Activated T-helper 1 cell treated with anti-CD3 and anti-CD28 coated beads, Interleukin-12 subunit alpha, Interleukin-12 subunit beta, Interleukin-2, Interleukin-4 antibody, amounts not matched to agents 30 ng/mL and 10 ng/mL and 1 ng/mL, durations not matched to agents 14 hours and 24 hours and 36 hours (primary cell): ENCODE measurements at regions of chr20 and their contacts with region 1.

Region 1: DNA sequence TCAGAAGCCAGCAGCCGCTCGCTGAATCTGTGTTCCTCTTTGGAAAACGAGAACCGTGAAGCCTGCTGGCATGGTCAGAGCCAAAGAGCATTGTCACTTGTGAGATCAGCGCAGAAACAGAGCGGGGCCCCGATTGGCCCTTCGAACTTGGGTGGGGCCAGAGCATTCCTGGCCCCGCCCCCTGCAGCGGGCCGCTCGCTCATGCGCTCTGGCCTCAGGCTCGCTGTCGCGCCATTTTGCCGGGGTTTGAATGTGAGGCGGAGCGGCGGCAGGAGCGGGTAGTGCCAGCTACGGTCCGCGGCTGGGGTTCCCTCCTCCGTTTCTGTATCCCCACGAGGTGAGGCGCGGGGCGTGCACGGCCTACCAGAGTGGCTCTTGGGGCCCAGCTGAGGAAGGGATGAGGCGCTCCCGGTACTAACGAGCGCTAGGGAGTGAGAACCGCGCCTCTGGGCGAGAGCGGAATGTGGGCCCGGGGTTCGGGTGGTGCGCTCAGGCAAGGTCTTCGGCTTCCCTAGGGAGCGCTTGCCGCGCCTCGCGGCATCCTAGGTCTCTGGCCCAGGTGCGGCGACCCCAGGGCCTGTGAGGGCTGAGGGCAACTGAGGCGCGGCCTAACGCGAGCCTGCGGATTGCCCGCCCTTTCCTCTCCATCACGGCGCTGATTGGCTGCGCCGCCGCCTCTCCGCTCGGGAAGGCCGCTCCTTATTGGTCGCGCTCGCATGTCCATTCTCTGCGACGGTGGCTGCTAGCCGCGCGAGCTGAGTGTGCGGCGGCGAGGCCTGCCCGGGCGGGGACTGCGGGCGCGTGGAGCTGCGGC is at the start of gene CSE1L:
- DNase-seq: peak; percentile 94
- H3K4me3 Mint-ChIP-seq: peak within 1 kb of the TSS; percentile 88
- H3K27ac Mint-ChIP-seq: peak within 1 kb of the TSS; percentile 99
- H3K4me1 Mint-ChIP-seq: peaks cover 27% of the 10 kb centered on the region
- H3K27me3 Mint-ChIP-seq: peaks cover 2% of the 10 kb centered on the region
- total RNA-seq, gene CSE1L: 112 and 119 TPM in 2 replicates

Region 2: DNA sequence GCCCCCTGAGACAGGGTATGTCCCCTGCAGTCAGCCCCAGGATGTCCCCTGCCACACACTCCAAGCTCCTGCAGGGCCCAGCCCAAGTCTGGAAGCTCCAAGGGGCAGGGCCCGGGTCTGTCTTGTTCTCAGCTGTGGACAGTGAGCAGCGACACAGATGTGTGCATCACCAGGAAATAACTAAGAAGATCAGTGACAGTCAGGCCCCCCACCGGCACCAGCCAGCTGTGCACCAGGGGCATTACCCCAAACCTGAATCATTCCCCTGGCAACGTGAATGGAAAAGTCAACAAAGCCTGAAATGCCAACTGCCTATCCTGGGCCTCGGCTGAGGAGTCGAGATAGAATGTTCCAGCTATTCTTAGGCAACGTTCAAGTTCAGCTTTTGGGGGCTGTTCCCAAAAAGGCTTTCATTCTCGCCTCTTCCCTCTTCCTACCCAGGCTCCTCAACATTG is 323.5 kb before region 1 on chr20:
- intact Hi-C with region 1: no loop called
- DNase-seq: no peak
- H3K4me3 Mint-ChIP-seq: no peak overlapping the region
- H3K27ac Mint-ChIP-seq: peak overlapping the region; percentile 69
- H3K4me1 Mint-ChIP-seq: peaks cover 52% of the 10 kb centered on the region
- H3K27me3 Mint-ChIP-seq: no peaks in the 10 kb centered on the region

Region 3: GRCh38 chr20:48921151-48921898 is 125.0 kb before region 1 on chr20 and contains the start of gene ARFGEF2:
- intact Hi-C with region 1: loop called (anchors 1 kb)
- DNase-seq: peak; percentile 96
- H3K4me3 Mint-ChIP-seq: peak within 1 kb of the TSS; percentile 98
- H3K27ac Mint-ChIP-seq: peak within 1 kb of the TSS; percentile 99
- H3K4me1 Mint-ChIP-seq: peaks cover 50% of the 10 kb centered on the region
- H3K27me3 Mint-ChIP-seq: peaks cover 4% of the 10 kb centered on the region
- total RNA-seq, gene ARFGEF2: 28.3 and 30.1 TPM in 2 replicates

Region 4: DNA sequence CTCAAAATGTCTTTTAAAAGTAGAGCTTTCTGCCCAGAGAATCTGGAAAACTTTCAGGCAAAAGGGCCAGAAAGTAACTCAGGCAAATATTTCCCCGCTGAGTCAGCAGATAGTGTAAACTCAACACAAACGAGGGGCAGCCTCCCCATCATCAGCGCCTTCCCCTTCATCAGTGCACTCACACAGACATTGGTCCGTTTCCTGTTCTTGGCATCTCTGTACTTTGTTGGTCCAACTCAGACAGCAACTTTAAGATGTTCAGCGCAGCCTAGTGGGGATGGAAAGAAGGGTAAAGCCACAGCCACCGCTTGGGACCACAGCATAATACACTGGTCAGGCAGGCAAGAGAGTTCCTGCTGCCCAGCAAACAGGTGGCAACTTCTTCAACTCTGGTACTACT is 69.3 kb after region 1 on chr20:
- intact Hi-C with region 1: no loop called
- DNase-seq: no peak
- H3K4me3 Mint-ChIP-seq: no peak overlapping the region
- H3K27ac Mint-ChIP-seq: no peak overlapping the region
- H3K4me1 Mint-ChIP-seq: no peaks in the 10 kb centered on the region
- H3K27me3 Mint-ChIP-seq: no peaks in the 10 kb centered on the region

Region 5: GRCh38 chr20:49166534-49167449 is 120.5 kb after region 1 on chr20:
- intact Hi-C with region 1: loop called (anchors 5 kb)
- DNase-seq: no peak
- H3K4me3 Mint-ChIP-seq: peak overlapping the region; percentile 72
- H3K27ac Mint-ChIP-seq: peak overlapping the region; percentile 89
- H3K4me1 Mint-ChIP-seq: peaks cover 51% of the 10 kb centered on the region
- H3K27me3 Mint-ChIP-seq: no peaks in the 10 kb centered on the region

Region 6: DNA sequence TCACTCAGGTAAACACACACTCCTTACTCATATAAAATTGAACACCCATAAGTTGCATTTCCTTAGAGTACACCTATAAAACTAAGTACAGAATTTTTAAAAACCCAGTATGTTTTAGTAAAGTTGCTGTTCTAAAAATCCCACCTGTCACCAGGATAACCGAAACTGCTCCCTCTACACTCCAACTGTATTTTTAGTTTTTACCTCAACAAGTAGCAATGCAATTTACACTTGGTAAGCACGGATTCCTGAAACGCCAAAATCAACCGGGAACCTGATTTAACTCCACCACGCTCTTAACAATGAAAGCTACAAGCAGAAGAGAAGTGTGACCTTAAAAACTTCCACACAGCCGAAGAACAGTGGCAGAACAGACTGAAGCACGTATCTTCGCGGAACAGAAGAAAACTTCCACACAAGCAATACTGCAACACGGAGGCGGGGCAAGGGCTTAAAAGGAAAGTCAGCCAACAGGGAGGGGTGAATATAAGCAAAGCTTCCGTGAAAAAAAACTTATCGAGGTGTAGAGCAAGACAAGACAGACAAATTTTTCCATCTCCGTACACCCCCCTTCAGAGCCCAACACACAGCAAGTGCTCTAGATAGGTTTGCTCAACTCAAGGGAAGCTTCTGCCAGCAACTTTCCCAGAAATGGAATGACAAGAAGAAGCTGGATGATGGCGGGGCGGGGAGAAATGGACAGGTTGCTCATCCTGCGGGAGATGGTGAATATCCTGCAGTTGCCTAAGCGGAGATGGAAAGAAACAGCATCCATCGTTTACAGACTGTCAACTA is 140.4 kb after region 1 on chr20:
- intact Hi-C with region 1: loop called (anchors 1 kb)
- DNase-seq: peak; percentile 66
- H3K4me3 Mint-ChIP-seq: peak overlapping the region; percentile 89
- H3K27ac Mint-ChIP-seq: peak overlapping the region; percentile 81
- H3K4me1 Mint-ChIP-seq: peaks cover 50% of the 10 kb centered on the region
- H3K27me3 Mint-ChIP-seq: peaks cover 4% of the 10 kb centered on the region

Region 7: GRCh38 chr20:49256261-49256660 is 210.0 kb after region 1 on chr20:
- intact Hi-C with region 1: no loop called
- DNase-seq: no peak
- H3K4me3 Mint-ChIP-seq: no peak overlapping the region
- H3K27ac Mint-ChIP-seq: no peak overlapping the region
- H3K4me1 Mint-ChIP-seq: peaks cover 14% of the 10 kb centered on the region
- H3K27me3 Mint-ChIP-seq: no peaks in the 10 kb centered on the region

Region 8: DNA sequence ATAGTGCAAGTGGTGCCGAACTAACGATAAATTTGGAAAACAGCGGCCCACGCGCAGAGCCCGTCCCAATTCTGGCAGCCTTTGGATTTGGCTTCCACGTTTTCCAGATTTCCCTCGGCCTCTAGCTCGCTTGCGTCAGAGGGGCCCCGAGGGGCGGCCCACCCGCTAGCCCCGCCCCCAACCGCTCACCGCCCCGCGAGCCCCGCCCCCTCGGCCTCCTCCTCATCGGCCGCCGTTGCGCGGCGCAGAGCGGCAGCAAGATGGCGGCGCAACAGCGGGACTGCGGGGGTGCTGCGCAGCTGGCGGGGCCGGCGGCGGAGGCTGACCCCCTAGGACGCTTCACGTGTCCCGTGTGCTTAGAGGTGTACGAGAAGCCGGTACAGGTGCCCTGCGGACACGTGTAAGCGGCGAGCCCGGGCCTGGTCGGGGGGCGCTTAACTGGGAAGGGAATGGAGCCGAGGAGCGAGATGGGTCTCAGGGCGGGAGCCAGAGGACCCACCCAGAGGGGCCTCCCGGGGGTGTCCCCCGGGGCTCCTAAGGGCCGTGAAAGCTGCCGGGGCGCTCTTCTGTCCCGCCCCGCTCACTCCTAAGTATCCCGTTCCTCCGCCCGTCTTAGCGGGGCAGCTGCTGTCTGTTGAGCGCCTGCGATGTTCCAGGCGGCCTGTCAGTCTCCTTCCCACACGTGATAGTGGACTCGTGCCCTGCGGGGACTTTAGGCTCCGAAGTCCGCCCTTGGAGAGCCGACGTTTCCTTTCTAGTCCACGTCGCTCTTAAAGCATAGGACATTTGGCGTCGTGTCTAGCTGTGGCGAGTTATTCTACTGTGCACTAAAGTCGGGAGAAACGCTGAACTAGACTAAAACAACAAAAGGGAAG is 890.1 kb after region 1 on chr20 and contains the start of gene RNF114:
- intact Hi-C with region 1: loop called (anchors 2 kb)
- DNase-seq: peak; percentile 82
- H3K4me3 Mint-ChIP-seq: peak within 1 kb of the TSS; percentile 94
- H3K27ac Mint-ChIP-seq: peak within 1 kb of the TSS; percentile 93
- H3K4me1 Mint-ChIP-seq: peaks cover 34% of the 10 kb centered on the region
- H3K27me3 Mint-ChIP-seq: no peaks in the 10 kb centered on the region
- total RNA-seq, gene RNF114: 58.7 and 60.3 TPM in 2 replicates

Region 9: GRCh38 chr20:50958615-50959542 is 1912.6 kb after region 1 on chr20 and contains the start of gene MOCS3:
- intact Hi-C with region 1: loop called (anchors 2 kb)
- DNase-seq: peak; percentile 80
- H3K4me3 Mint-ChIP-seq: peak within 1 kb of the TSS; percentile 99
- H3K27ac Mint-ChIP-seq: peak within 1 kb of the TSS; percentile 92
- H3K4me1 Mint-ChIP-seq: peaks cover 50% of the 10 kb centered on the region
- H3K27me3 Mint-ChIP-seq: no peaks in the 10 kb centered on the region
- total RNA-seq, gene MOCS3: 6.2 and 6.7 TPM in 2 replicates